Posterior vena cava (tissue), 2 donors: ENCODE measurements at regions of chr6 and their contacts with region 1.

Region 1: GRCh38 chr6:64357430-64357829 is 721.8 kb downstream of the PHF3 start:
- DNase-seq: no peak

Region 2: GRCh38 chr6:63724721-63725120 is 632.7 kb before region 1 on chr6:
- intact Hi-C with region 1: no loop called
- DNase-seq: no peak

Region 3: GRCh38 chr6:66103954-66104353 is 1746.5 kb after region 1 on chr6:
- intact Hi-C with region 1: loop called in 1 of 2 experiments (anchors 10 kb)
- DNase-seq: no peak